Posterior cingulate gyrus (tissue), 11 donors: ENCODE measurements at regions of chr5 and their contacts with region 1.

Region 1: DNA sequence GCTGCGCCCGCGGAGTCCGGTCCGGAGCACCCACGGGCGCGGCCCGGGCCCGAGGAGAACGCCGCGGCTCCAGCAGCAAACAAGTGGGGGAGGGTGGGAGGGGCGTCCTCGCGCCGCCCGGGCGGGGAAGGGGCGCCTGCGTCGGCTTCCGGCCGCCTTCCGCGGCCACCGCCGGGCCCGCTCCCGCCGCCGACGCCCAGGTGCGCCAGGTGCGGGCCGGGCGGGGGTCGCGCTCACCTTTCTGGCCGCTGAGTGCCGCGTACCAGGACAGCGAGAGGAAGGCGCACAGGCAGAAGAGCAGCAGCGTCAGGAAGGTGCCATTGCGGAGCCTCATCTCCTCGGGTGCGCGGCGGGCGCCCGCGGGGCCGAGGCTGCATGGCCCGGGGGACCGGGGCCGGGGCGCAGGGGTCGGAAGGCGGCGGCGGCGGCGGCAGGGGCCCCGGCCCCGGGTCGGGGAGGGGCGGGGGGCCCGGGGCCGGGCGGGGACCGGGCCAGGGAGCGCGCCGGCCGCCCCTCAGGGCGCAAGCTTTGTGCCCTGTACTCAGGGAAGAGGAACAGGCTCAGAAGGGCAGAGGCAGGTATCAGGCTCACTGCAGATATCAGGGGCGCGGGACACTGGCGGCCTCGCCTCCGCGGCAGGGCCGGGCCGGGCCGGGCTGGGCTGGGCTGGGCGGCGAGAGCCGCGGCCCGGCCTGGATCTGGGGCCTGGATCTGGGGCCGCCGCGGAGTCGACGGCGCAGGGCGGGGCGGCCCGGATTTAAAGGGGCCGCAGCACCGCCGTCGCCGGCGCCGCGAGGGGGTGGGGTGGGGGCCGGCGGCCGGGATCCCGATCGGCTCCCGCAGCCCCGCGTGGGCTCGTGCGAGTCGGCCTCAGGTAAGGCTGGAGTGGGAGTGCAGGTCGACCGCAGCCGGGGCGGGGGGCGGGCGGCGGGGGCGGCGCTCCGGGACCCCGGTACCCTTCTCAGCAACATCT is at the start of gene MGAT4B:
- DNase-seq: peak in 9 of 10 donors; percentile 58 to 96 (median 70)

Region 2: DNA sequence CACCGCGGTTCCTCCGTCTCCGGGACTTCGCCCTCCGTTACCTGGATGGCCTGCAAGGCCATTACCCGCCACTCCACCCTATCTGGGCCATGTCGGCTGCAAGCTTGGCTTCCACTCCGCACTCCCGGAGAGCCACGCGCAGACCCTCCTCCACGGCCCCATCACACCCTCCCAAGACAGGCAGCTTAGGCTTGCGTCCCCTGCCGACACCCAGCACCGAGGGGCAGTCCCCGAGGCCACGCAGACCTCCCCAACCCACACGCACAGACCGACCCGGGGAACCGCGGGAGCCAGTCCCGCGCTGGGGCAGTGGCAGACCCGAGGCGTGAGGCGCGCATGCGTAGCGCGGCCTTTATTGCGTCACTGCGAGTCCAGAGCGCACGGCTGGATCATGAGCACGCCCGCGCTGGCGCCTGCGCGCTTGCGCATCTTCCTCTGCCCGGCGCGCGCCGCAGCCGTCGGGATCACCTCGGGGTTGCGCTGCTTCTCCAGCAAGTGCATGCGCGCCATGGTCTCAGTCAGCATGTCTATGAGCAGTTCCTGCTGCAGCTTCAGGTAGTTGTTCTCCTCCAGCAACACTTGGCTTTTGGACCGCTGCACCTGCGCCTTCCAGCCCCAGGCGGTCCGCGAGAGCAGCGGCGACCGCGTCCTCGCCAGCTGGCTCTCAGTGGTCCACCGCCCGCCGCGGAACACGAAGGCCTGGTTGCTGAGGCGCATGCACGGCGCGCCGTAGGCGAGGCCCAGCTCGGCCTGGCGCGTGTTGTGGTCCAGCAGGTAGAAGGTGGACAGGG is 128.1 kb before region 1 on chr5:
- intact Hi-C with region 1: loop called (anchors 5 kb)
- DNase-seq: peak; percentile 85 to 99 (median 94)

Region 3: DNA sequence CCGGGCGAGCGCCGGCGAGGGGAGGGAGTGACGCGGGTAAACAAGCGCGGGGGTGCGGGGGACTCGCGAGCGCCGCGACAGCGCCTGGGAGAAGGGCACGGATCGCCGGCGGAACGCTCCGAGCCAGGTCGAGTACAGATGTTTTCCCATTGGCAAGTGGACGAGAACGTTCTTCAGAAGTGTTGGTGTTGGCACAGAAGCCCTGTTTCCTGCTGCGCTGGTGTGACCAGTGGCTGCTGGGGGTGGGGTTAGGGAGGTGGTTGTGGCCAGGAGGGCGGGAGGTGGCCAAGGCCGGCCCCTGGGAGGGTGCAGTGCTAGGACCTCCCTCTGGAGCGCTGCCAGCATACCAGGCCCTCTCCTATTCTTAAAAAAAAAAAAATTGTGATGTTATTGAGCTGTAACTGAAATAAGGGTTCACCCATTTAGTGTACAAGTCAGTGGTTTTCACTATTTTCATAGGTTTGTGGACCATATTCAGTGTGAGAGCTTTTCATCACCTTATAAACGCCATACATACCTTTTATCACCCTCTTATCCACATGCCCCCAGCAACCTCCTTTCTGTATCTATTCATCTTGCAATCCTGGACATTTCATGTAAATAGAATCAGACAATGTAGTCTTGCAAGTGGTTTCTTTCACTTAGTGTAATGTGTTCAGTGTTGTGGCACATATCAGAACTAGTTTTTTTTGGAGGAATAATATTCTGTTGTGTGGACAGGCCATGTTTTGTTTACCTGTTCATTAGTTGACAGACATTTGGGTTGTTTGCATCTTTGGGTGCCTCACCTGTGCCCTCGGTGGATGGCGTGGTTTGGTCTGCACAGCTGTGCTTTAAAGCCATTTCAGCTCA is 15.3 kb after region 1 on chr5:
- intact Hi-C with region 1: loop called (anchors 2 kb)
- DNase-seq: peak; percentile 83 to 98 (median 89)

Region 4: GRCh38 chr5:179858586-179859427 is 52.3 kb after region 1 on chr5 and contains the start of gene MRNIP:
- intact Hi-C with region 1: loop called (anchors 5 kb)
- DNase-seq: peak; percentile 94 to 100 (median 98)

Region 5: DNA sequence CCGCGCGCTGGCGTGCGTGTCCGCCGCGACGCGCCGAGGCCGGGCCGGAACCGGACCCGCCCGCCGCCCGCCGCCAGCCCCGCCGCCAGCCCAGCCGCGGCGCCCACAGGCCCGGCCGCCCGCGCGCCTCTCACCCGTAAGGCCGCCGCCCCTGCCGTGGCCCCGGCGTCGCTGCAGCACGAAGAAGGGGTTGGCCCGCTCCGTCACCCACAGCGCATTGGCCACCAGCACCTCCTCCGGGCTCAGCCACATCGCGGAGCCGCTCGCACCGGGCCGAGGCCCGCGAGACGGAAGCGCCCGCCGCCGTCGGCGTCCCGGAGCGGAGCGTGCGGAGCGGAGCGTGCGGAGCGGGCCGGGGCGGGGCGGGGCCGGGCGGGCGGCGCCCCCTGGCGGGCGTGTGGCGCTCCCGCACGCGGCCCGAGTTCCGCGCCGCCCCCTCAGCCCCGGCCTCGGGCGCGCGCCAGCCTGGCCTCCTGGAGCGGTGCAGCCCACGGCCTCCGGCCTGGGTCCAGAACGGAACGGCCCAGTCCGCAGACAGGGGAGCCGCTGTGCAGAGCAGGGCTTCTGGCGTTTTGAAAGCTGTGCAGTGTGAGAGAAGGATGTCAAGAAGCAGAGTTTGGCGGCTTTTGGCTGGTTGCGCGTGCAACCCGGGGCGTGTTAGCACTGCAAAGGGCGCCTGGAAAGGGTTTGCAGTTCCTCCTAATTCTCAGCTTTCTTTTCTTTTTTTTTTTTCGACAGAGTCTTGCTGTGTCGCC is 101.2 kb after region 1 on chr5 and contains the start of gene TBC1D9B:
- intact Hi-C with region 1: loop called (anchors 5 kb)
- DNase-seq: peak in 8 of 10 donors; percentile 38 to 93 (median 55)

Region 6: DNA sequence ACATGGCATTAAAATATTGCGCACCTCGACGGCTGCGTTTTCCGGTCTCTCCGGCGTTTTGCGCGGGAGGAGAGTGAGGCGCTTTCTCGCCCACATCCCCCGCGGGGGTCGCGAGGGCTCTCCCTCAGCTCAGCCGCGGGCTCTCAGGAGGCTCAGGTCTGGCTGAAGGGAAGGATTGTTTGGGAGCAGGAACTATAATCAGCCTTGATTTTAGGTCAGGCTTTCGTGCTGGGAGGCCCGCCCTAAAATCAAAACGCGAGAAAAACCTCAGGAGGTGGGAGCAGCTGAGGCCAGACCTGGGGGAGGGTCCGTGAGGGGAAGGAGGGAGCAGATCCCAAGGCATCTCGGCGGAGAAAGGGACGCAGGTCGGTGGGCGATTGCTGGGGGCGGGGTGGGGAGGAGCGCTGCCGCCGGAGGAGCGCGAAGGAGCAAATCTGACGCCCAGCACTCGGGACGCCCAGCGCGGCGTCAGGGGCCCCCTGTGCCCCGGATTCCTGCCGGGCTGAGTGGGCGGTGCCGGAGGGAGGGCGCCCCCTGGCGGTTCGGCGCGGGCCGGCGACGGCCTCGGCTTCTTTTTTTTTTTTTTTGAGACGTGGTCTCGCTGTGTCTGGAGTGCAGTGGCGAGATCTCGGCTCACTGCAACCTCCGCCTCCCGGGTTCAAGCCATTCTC is 283.7 kb after region 1 on chr5:
- intact Hi-C with region 1: loop called (anchors 10 kb)
- DNase-seq: peak in 8 of 10 donors; percentile 47 to 96 (median 64)